HepG2 (cell line): ENCODE measurements at regions of chr20 and their contacts with region 1.

Region 1: GRCh38 chr20:25539742-25540672 is 45.3 kb downstream of the NINL start:
- DNase-seq: no peak
- ATAC-seq: peak; percentile 17
- H3K4me3 ChIP-seq: peak overlapping the region in 1 of 3 experiments; percentile 44; a peak in 1 of 6 replicates
- H3K27ac ChIP-seq: peak overlapping the region; percentile 59
- H3K4me1 ChIP-seq: peaks cover 73% of the 10 kb centered on the region
- H3K27me3 ChIP-seq: no peaks in the 10 kb centered on the region
- CTCF ChIP-seq: peak; percentile 53
- EP300 ChIP-seq: no peak
- POLR2A ChIP-seq: no peak
- RAD21 ChIP-seq: peak; percentile 47; the same call in 1 of the 2 replicates

Region 2: DNA sequence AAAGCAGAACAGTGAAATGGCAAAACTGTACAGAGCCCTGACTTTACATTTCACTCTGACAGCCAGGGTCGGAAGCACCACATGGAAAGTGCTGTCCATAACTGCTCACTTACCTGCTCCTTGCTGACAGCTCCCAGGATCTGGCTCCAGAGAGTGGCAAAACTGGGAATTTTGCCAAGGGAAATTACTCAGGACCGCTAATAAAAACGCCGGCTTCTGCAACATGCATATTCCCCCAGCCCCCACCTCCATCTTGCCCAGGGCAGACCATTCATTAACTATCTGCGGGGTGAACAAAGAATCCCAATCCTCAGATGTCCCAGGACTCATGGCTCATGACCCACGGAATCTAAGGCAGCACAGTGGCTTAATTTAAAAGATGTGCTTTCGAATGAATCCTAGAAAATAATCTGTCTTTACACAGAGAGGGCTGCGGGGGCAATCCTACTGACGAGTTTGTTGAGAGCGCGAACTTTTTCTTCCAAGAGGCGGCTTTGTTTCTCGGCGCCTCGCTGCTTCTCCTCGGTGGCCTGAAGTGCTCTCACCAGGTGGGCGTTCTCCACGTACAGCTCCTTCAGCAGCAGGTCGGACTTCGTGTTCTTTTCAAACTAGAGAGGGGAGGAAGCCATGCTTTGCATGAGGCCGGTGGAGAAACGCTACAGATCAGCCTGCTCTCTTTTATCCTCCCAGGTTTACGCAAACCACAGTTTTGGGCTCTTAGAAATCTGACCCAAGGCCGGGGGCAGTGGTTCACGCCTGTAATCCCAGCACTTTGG is 86.8 kb before region 1 on chr20:
- CTCF ChIA-PET with region 1: no interaction called
- POLR2A ChIA-PET with region 1: no interaction called
- in situ Hi-C with region 1: no loop called
- intact Hi-C with region 1: no loop called
- DNase-seq: no peak
- ATAC-seq: no peak
- H3K4me3 ChIP-seq: no peak overlapping the region
- H3K27ac ChIP-seq: no peak overlapping the region
- H3K4me1 ChIP-seq: no peaks in the 10 kb centered on the region
- H3K27me3 ChIP-seq: no peaks in the 10 kb centered on the region
- CTCF ChIP-seq: no peak
- EP300 ChIP-seq: no peak
- POLR2A ChIP-seq: no peak
- RAD21 ChIP-seq: no peak

Region 3: DNA sequence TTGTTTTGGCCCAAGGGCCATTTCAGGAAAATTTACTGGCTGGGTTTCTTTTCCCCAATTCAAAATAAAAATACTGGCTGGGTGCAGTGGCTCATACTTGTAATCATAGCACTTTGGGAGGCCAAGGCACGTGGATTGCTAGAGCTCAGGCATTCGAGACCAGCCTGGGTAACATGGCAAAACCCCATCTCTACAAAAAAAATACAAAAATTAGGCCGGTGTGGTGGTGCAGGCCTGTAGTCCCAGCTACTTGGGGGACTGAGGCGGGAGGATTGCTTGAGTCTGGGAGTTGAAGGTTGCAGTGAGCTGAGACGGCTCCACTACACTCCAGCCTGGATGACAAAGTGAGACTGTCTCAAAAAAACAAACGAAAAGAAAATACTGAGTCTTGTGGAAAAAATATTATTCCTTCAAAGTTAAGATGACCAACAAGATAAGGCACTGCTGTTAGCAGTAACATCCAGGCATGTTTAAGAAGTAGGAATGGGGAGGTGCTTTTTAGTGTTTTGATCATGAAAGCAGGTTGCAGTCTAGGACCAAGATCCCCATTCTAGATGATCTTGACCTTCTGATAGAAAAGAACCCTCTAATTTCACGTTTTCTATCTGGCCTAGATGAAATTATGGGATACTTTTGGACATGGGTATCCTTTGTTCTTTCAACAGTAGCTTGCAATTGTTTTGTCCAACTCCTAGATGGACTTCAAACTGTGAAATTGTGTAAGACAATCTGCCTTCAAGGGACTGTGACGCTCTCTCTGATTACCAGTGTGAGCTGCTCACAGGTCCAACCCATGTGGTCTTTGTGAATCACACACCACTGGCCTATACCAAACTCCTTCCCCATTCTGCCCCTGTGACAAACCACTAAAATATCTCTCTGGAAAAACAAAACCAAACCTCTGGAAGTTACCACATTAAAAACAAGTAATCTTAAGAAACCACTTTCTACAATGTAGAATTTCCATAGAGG is 14.4 kb before region 1 on chr20:
- CTCF ChIA-PET with region 1: no interaction called
- POLR2A ChIA-PET with region 1: interaction called, 19 read pairs
- in situ Hi-C with region 1: no loop called
- intact Hi-C with region 1: no loop called
- DNase-seq: peak; percentile 97
- ATAC-seq: peak; percentile 98
- H3K4me3 ChIP-seq: no peak overlapping the region
- H3K27ac ChIP-seq: peak overlapping the region; percentile 50
- H3K4me1 ChIP-seq: peaks cover 44% of the 10 kb centered on the region
- H3K27me3 ChIP-seq: no peaks in the 10 kb centered on the region
- CTCF ChIP-seq: no peak
- EP300 ChIP-seq: peak; percentile 29 to 76; a peak in 2 of 4 replicates
- POLR2A ChIP-seq: no peak
- RAD21 ChIP-seq: 0 out of 2 replicates have a peak, but pooled peaks have one; percentile 8

Region 4: GRCh38 chr20:25623736-25624499 is 83.9 kb after region 1 on chr20 and contains the start of gene NANP:
- CTCF ChIA-PET with region 1: no interaction called
- POLR2A ChIA-PET with region 1: interaction called, 4 read pairs
- in situ Hi-C with region 1: no loop called
- intact Hi-C with region 1: loop called (anchors 2 kb)
- DNase-seq: peak; percentile 100
- ATAC-seq: peak; percentile 91
- H3K4me3 ChIP-seq: peak within 1 kb of the TSS; percentile 75 to 87 (median 80)
- H3K27ac ChIP-seq: peak within 1 kb of the TSS; percentile 96
- H3K4me1 ChIP-seq: peaks cover 51% of the 10 kb centered on the region
- H3K27me3 ChIP-seq: no peaks in the 10 kb centered on the region; a peak in 1 of 5 replicates
- CTCF ChIP-seq: peak; percentile 65
- EP300 ChIP-seq: peak in 1 of 2 experiments; percentile 30; a peak in 2 of 4 replicates
- POLR2A ChIP-seq: peak; percentile 97 to 98
- RAD21 ChIP-seq: peak; percentile 62
- total RNA-seq, gene NANP: 21.5 and 31.0 TPM in 2 replicates